OCI-LY7 (cell line): ENCODE measurements at regions of chr5 and their contacts with region 1.

Region 1: DNA sequence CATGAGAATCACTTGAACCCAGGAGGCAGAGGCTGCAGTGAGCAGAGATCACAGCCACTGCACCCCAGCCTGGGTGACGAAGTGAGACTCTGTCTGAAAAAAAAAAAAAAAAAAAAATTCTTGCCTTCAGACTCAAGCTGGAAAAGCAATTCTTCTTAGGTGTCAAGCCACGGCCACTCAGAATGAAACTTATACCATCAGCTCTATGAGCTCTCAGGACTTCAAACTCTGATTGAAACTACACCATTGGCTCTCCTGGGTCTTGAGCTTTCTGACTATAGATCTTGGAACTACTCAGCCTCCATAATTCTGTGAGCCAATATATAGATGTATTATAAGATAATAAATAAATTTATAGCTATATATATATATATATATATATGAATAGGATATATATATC is 12.9 kb upstream of the FGF10 start:
- DNase-seq: no peak
- H3K4me3 ChIP-seq: no peak overlapping the region
- H3K27ac ChIP-seq: no peak overlapping the region
- H3K4me1 ChIP-seq: no peaks in the 10 kb centered on the region
- CTCF ChIP-seq: no peak

Region 2: DNA sequence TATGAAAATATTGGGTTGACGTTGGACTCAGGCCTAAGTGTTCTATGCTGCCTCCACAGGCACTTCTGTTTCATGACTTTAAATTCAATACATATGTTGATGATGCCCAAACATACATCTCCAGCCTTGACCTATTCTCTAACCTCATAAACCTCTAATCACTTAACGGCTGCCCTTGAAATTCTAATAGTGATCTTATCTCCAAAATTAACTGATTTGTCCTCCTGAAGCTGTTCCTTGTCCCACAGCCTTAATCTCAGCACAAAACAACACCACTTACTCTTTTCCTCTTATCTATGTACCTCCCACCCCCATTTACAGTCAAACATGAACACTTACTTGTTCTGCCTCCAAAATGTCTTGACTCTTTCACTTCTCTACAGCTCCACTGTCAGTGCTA is 56.2 kb before region 1 on chr5:
- CTCF ChIA-PET with region 1: no interaction called
- POLR2A ChIA-PET with region 1: no interaction called
- intact Hi-C with region 1: loop called (anchors 10 kb)
- DNase-seq: no peak
- H3K4me3 ChIP-seq: no peak overlapping the region
- H3K27ac ChIP-seq: no peak overlapping the region
- H3K4me1 ChIP-seq: no peaks in the 10 kb centered on the region
- CTCF ChIP-seq: no peak